ENCODE measurements at regions of chr19 and their contacts with region 1.

Region 1: GRCh38 chr19:18985257-18985656 is 44.2 kb upstream of the HOMER3 start:
- DNase-seq: no peak
- ATAC-seq: no peak
- H3K4me3 ChIP-seq: no peak overlapping the region
- H3K27ac ChIP-seq: no peak overlapping the region
- H3K4me1 ChIP-seq: peaks cover 0 to 4% of the 10 kb centered on the region in 2 experiments; a peak in 1 of 5 replicates
- H3K27me3 ChIP-seq: peaks cover 11 to 29% of the 10 kb centered on the region in 2 experiments; a peak in 3 of 5 replicates
- CTCF ChIP-seq: no peak
- EP300 ChIP-seq: no peak
- POLR2A ChIP-seq: no peak
- RAD21 ChIP-seq: no peak

Region 2: GRCh38 chr19:18771328-18772242 is 213.7 kb before region 1 on chr19:
- CTCF ChIA-PET with region 1: no interaction called
- POLR2A ChIA-PET with region 1: no interaction called
- in situ Hi-C with region 1: no loop called
- intact Hi-C with region 1: loop called (anchors 5 kb)
- DNase-seq: peak in 3 of 4 experiments; percentile 50 to 63 (median 63)
- ATAC-seq: peak; percentile 86
- H3K4me3 ChIP-seq: no peak overlapping the region
- H3K27ac ChIP-seq: no peak overlapping the region
- H3K4me1 ChIP-seq: peaks cover 0 to 66% of the 10 kb centered on the region in 2 experiments; a peak in 4 of 5 replicates
- H3K27me3 ChIP-seq: peaks cover 9 to 40% of the 10 kb centered on the region in 2 experiments; a peak in 4 of 5 replicates
- CTCF ChIP-seq: peak; percentile 72
- EP300 ChIP-seq: no peak
- POLR2A ChIP-seq: no peak
- RAD21 ChIP-seq: peak; percentile 44 to 63

Region 3: DNA sequence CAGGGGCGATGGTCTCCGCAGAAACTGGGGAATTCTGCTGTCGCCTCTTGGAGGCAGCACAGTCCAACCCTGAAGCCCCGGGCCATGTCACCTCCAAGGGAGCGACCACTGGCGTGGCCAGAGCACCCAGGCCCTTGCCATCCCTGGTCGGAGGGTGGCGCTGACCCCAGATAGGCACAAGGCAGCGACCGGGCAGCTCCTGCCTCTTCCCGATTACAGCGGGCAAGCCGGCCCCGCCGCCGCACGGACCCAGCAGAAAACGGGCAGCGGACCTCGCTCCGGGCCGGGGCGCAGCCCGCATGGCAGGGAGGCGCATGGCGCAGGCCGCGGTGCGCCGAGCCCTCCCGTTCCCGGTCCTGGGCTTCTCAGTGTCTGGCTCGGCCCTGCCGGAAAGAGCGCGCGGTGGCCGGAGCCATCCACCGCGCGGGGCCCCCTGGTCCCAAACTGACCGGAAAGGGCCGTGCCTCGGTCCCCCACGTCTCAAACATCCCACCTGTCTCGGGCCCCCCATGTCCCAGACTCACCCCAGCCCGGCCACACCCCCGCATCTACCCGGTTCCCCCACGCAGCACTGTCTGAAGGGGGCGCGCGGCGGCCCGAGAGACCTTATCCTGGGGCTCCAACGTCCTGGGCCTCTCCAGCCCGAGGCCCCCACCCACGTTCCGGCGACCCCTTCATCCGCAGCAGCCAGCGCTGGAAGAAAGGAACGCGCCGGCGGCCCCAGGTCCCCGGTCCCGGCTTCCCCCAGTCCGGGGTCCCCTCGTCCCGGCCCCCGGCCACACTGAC is 90.0 kb before region 1 on chr19:
- CTCF ChIA-PET with region 1: interaction called, 11 read pairs
- POLR2A ChIA-PET with region 1: interaction called, 3 read pairs
- in situ Hi-C with region 1: no loop called
- intact Hi-C with region 1: loop called (anchors 1 kb)
- DNase-seq: peak; percentile 69 to 72 (median 72)
- ATAC-seq: peak; percentile 81
- H3K4me3 ChIP-seq: peak overlapping the region; percentile 37
- H3K27ac ChIP-seq: no peak overlapping the region
- H3K4me1 ChIP-seq: peaks cover 12 to 64% of the 10 kb centered on the region in 2 experiments
- H3K27me3 ChIP-seq: peaks cover 0 to 5% of the 10 kb centered on the region in 2 experiments; a peak in 1 of 5 replicates
- CTCF ChIP-seq: peak; percentile 71 to 87 (median 80)
- EP300 ChIP-seq: no peak
- POLR2A ChIP-seq: no peak
- RAD21 ChIP-seq: peak; percentile 50 to 77

Region 4: GRCh38 chr19:18919086-18919899 is 66.0 kb before region 1 on chr19 and contains the starts of genes COPE and DDX49:
- CTCF ChIA-PET with region 1: interaction called, 3 read pairs
- POLR2A ChIA-PET with region 1: interaction called, 6 read pairs
- in situ Hi-C with region 1: no loop called
- intact Hi-C with region 1: loop called (anchors 1 kb)
- DNase-seq: peak; percentile 97 to 100 (median 98)
- ATAC-seq: peak; percentile 98
- H3K4me3 ChIP-seq: peak within 1 kb of the TSS; percentile 95
- H3K27ac ChIP-seq: peak within 1 kb of the TSS; percentile 90
- H3K4me1 ChIP-seq: peaks cover 8 to 27% of the 10 kb centered on the region in 2 experiments; a peak in 4 of 5 replicates
- H3K27me3 ChIP-seq: no peaks in the 10 kb centered on the region
- CTCF ChIP-seq: no peak
- EP300 ChIP-seq: no peak
- POLR2A ChIP-seq: peak; percentile 95
- RAD21 ChIP-seq: no peak
- polyA plus RNA-seq, gene COPE: 5.8 to 18.3 TPM
- polyA plus RNA-seq, gene DDX49: 1.1 to 6.3 TPM

Region 5: DNA sequence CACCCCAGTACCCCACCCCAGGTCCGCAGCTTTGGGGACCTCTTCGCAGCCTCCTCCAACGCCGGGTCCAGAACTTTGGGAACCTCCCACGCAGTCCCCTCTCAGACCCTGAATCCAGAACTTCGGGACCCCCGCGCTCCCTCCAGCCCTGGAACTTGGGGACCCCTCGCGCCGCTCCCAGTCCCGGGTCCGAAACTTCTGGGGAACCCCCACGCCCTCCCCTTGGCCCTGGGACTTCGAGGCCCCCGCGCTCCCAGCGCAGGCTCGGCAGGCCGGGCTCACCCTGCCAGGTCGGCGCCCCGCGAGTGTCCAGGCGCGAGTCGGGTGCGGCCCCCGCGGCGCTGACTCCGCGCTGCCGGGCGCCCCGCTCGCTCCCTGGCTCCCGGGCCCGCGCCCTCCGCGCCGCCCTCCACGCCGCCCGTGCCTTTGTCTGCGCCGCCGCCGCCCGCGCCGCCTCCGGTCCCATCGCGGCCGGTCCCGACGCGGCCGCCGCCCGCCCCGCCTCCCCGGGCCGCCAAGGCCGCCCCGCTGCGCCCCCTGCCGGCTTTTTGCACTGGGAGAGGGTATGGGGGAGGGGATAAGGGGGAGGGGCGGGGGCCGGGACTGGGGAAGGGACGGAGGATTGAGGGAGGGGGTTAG is 44.4 kb before region 1 on chr19 and contains the start of gene HOMER3:
- CTCF ChIA-PET with region 1: interaction called, 5 read pairs
- POLR2A ChIA-PET with region 1: no interaction called
- in situ Hi-C with region 1: no loop called
- intact Hi-C with region 1: loop called (anchors 5 kb)
- DNase-seq: peak; percentile 85 to 95 (median 94)
- ATAC-seq: peak; percentile 91
- H3K4me3 ChIP-seq: peak within 1 kb of the TSS; percentile 38
- H3K27ac ChIP-seq: no peak within 1 kb of the TSS
- H3K4me1 ChIP-seq: peaks cover 3 to 18% of the 10 kb centered on the region in 2 experiments; a peak in 4 of 5 replicates
- H3K27me3 ChIP-seq: peaks cover 0 to 8% of the 10 kb centered on the region in 2 experiments; a peak in 1 of 5 replicates
- CTCF ChIP-seq: peak in 2 of 3 experiments; percentile 34 to 63; a peak in 4 of 6 replicates
- EP300 ChIP-seq: no peak
- POLR2A ChIP-seq: no peak
- RAD21 ChIP-seq: no peak
- polyA plus RNA-seq, gene HOMER3: not detected

Region 6: GRCh38 chr19:18951665-18952281 is 33.5 kb before region 1 on chr19:
- CTCF ChIA-PET with region 1: no interaction called
- POLR2A ChIA-PET with region 1: no interaction called
- in situ Hi-C with region 1: no loop called
- intact Hi-C with region 1: no loop called
- DNase-seq: no peak
- ATAC-seq: no peak
- H3K4me3 ChIP-seq: no peak overlapping the region
- H3K27ac ChIP-seq: no peak overlapping the region
- H3K4me1 ChIP-seq: peaks cover 0 to 8% of the 10 kb centered on the region in 2 experiments; a peak in 2 of 5 replicates
- H3K27me3 ChIP-seq: peaks cover 0 to 13% of the 10 kb centered on the region in 2 experiments; a peak in 1 of 5 replicates
- CTCF ChIP-seq: no peak
- EP300 ChIP-seq: no peak
- POLR2A ChIP-seq: no peak
- RAD21 ChIP-seq: no peak

Region 7: DNA sequence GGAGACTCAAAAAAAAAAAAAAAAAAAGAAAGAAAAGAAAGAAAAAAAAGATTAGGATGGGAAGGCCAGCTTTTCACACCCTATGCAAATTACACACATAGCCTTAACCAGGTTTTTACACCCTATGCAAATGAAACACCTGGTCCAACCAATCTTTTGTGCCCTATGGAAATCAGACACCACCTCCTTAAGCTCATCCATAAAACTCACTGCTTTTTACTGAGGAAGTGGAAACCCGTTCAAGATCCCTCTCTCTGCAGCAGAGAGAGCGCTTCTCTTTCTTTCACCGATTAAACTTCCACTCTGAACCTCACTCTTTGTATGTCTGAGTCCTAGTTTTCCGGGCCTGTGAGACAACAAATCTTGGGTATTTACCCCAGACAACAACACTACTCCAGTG is 18.9 kb before region 1 on chr19:
- CTCF ChIA-PET with region 1: no interaction called
- POLR2A ChIA-PET with region 1: no interaction called
- in situ Hi-C with region 1: no loop called
- intact Hi-C with region 1: no loop called
- DNase-seq: no peak
- ATAC-seq: peak; percentile 48; the same call in 2 of the 3 replicates
- H3K4me3 ChIP-seq: no peak overlapping the region
- H3K27ac ChIP-seq: no peak overlapping the region
- H3K4me1 ChIP-seq: peaks cover 0 to 7% of the 10 kb centered on the region in 2 experiments; a peak in 3 of 5 replicates
- H3K27me3 ChIP-seq: peaks cover 0 to 9% of the 10 kb centered on the region in 2 experiments; a peak in 2 of 5 replicates
- CTCF ChIP-seq: no peak
- EP300 ChIP-seq: no peak
- POLR2A ChIP-seq: no peak
- RAD21 ChIP-seq: no peak

Region 8: DNA sequence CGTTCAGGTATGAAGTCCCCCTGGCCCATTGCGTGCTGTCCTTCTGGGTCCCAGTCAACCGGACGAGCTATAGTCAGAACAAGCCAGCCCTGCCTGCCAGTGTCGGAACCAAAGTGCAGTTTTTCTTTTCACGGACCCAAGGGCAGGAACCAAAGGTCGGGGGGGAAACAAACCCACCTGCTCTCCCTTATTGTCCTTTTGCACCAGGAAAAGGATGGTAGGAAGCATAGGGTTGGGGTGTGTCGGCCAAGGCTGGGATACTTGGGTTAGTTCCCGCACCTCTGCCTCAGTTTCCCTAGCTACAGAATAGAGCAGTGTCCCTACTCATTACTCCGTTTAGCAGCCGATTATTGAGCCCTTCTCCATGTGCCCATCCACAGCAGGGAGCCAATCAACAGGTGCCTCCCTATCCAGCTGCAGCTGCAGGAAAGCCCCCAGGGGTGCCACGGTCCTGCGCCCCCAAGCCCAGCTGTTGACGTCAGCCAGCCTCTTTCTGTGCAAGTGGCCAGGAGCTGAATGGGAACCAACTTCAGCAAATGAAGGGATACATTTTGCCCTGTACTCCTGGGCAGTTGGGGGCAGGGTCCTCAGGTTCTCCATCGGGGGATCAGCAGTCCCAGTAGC is 69.2 kb after region 1 on chr19:
- CTCF ChIA-PET with region 1: no interaction called
- POLR2A ChIA-PET with region 1: no interaction called
- in situ Hi-C with region 1: no loop called
- intact Hi-C with region 1: no loop called
- DNase-seq: no peak
- ATAC-seq: no peak
- H3K4me3 ChIP-seq: no peak overlapping the region
- H3K27ac ChIP-seq: no peak overlapping the region
- H3K4me1 ChIP-seq: peaks cover 11 to 59% of the 10 kb centered on the region in 2 experiments
- H3K27me3 ChIP-seq: no peaks in the 10 kb centered on the region
- CTCF ChIP-seq: no peak
- EP300 ChIP-seq: no peak
- POLR2A ChIP-seq: 0 out of 2 replicates have a peak, but pooled peaks have one; percentile 1
- RAD21 ChIP-seq: no peak

Region 9: DNA sequence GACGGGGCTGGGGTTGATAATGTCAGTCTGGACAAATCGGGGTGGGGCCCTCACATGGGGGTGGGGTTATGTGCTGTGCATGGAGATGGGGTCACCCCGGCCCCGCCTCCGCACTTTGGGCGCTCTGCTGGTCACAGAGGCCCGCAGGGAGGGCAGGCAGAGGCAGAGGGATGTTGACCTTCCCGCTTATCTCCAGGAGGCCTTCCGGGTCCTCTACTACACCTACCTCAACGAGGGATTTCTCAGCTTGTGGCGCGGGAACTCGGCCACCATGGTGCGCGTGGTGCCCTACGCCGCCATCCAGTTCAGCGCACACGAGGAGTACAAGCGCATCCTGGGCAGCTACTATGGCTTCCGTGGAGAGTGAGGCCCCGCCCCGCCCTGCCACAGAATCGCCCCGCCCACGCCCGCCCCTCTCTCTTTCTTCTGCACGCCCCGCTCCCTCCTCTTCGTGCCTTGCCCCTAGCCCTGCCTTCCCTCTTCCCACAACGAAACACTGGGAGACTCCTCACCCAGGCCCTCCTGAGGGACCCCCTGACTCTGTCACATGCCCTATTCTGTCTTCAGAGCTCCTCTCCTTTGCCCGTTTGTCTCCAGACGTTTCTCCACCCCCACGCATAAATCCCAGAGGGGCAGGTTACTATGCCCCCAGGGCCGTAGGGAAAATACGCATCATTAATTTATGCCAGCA is 120.3 kb after region 1 on chr19:
- CTCF ChIA-PET with region 1: no interaction called
- POLR2A ChIA-PET with region 1: no interaction called
- in situ Hi-C with region 1: no loop called
- intact Hi-C with region 1: no loop called
- DNase-seq: peak; percentile 92 to 95 (median 93)
- ATAC-seq: peak; percentile 96
- H3K4me3 ChIP-seq: peak overlapping the region; percentile 41
- H3K27ac ChIP-seq: peak overlapping the region; percentile 75
- H3K4me1 ChIP-seq: peaks cover 14 to 45% of the 10 kb centered on the region in 2 experiments
- H3K27me3 ChIP-seq: no peaks in the 10 kb centered on the region
- CTCF ChIP-seq: no peak
- EP300 ChIP-seq: peak; percentile 5; the same call in 1 of the 2 replicates
- POLR2A ChIP-seq: peak; percentile 89
- RAD21 ChIP-seq: no peak